Activated T-helper 1 cell treated with anti-CD3 and anti-CD28 coated beads, Interleukin-12 subunit alpha, Interleukin-12 subunit beta, Interleukin-2, Interleukin-4 antibody, amounts not matched to agents 30 ng/mL and 10 ng/mL and 1 ng/mL, durations not matched to agents 14 hours and 24 hours and 36 hours (primary cell): ENCODE measurements at regions of chr10 and their contacts with region 1.

Region 1: GRCh38 chr10:91389636-91390512 is 20.3 kb upstream of the HECTD2 start:
- DNase-seq: no peak
- H3K4me3 Mint-ChIP-seq: no peak overlapping the region
- H3K27ac Mint-ChIP-seq: no peak overlapping the region
- H3K4me1 Mint-ChIP-seq: peaks cover 7% of the 10 kb centered on the region
- H3K27me3 Mint-ChIP-seq: peaks cover 16% of the 10 kb centered on the region

Region 2: DNA sequence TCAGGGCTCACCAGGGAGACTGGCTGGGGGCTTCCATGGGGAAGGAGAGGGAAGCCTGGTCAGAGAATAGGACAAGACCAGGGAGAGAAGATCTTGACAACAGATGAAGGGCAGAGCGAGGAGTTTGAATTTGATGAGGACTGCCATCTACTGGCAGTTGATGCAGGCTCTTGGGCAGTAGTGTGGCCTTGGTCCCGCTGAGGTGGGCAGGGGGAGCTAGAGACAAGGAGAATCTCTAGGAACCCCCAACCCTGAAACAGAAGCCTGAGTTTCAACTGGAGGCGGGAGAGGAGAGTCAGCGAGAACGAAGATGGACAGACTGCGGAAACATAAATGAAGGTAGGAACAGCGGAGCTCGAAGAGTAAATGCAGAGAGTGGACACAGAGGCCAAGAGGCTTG is 162.0 kb after region 1 on chr10:
- intact Hi-C with region 1: loop called (anchors 1 kb)
- DNase-seq: no peak
- H3K4me3 Mint-ChIP-seq: no peak overlapping the region
- H3K27ac Mint-ChIP-seq: no peak overlapping the region
- H3K4me1 Mint-ChIP-seq: no peaks in the 10 kb centered on the region
- H3K27me3 Mint-ChIP-seq: peaks cover 1% of the 10 kb centered on the region

Region 3: GRCh38 chr10:91632671-91633550 is 243.0 kb after region 1 on chr10 and contains the start of gene PPP1R3C:
- intact Hi-C with region 1: loop called (anchors 1 kb)
- DNase-seq: peak; percentile 46
- H3K4me3 Mint-ChIP-seq: peak within 1 kb of the TSS; percentile 73
- H3K27ac Mint-ChIP-seq: no peak within 1 kb of the TSS
- H3K4me1 Mint-ChIP-seq: no peaks in the 10 kb centered on the region
- H3K27me3 Mint-ChIP-seq: peaks cover 49% of the 10 kb centered on the region
- total RNA-seq, gene PPP1R3C: not detected in 2 replicates

Region 4: GRCh38 chr10:91694170-91694794 is 304.4 kb after region 1 on chr10:
- intact Hi-C with region 1: loop called (anchors 1 kb)
- DNase-seq: no peak
- H3K4me3 Mint-ChIP-seq: no peak overlapping the region
- H3K27ac Mint-ChIP-seq: no peak overlapping the region
- H3K4me1 Mint-ChIP-seq: peaks cover 9% of the 10 kb centered on the region
- H3K27me3 Mint-ChIP-seq: peaks cover 3% of the 10 kb centered on the region

Region 5: GRCh38 chr10:91724933-91725332 is 335.1 kb after region 1 on chr10:
- intact Hi-C with region 1: no loop called
- DNase-seq: no peak
- H3K4me3 Mint-ChIP-seq: no peak overlapping the region
- H3K27ac Mint-ChIP-seq: no peak overlapping the region
- H3K4me1 Mint-ChIP-seq: no peaks in the 10 kb centered on the region
- H3K27me3 Mint-ChIP-seq: peaks cover 7% of the 10 kb centered on the region

Region 6: DNA sequence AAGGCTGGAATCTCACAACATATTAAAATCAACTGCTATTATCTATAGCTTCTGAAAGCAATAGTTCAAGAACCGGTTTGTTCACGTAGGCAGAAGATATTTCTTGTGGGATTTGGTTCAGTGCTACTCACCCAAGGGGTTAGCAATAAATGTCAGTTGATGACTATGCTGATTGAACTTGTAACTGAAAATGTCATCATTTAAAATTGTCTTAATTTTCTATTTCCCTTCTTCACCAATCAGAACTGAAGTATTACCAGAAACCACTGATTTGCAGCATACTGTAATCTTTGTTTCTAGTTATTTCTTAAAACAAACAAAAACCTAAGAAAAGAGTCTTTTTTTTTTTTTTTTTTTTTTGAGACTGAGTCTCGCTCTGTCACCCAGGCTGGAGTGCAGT is 854.9 kb after region 1 on chr10:
- intact Hi-C with region 1: no loop called
- DNase-seq: no peak
- H3K4me3 Mint-ChIP-seq: no peak overlapping the region
- H3K27ac Mint-ChIP-seq: no peak overlapping the region
- H3K4me1 Mint-ChIP-seq: peaks cover 23% of the 10 kb centered on the region
- H3K27me3 Mint-ChIP-seq: peaks cover 6% of the 10 kb centered on the region